Prostate gland (tissue), 2 donors: ENCODE measurements at regions of chr7 and their contacts with region 1.

Region 1: DNA sequence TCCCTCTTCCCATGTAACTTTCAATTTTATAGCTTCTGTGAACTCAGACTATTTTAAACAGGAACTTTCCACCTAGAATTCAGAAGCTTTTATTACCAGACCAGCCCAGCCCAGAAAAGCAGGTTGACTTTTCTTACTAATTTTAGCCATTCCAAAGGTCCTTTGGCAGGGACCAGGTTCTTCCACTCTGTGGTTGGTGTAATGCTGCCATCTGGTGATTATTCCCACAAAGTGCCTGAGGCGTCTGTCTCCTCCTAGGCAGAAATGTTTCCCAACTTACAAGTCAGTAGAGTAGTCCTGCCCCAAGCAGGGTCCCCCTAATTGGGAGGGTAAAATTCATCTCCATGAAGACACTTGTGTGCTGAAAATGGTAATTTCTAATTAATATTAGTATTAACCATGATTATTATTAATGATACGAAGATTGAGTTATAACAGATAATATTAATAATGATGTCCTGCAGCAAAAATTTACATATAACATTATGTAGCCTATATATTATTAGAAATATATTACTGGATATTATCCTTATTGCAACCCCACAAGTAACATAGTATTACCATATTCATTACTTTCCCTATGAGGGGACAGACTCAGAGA is 53.0 kb upstream of the PPP1R17 start:
- DNase-seq: peak; percentile 55
- H3K4me3 ChIP-seq: no peak overlapping the region
- H3K27ac ChIP-seq: no peak overlapping the region
- H3K4me1 ChIP-seq: no peaks in the 10 kb centered on the region
- H3K27me3 ChIP-seq: no peaks in the 10 kb centered on the region
- CTCF ChIP-seq: peak in 3 of 4 experiments; percentile 60 to 74 (median 71)
- POLR2A ChIP-seq: no peak

Region 2: GRCh38 chr7:30983042-30983913 is 650.7 kb before region 1 on chr7:
- intact Hi-C with region 1: loop called (anchors 10 kb)
- DNase-seq: peak; percentile 73
- H3K4me3 ChIP-seq: no peak overlapping the region
- H3K27ac ChIP-seq: no peak overlapping the region
- H3K4me1 ChIP-seq: peaks cover 3% of the 10 kb centered on the region
- H3K27me3 ChIP-seq: no peaks in the 10 kb centered on the region
- CTCF ChIP-seq: peak; percentile 80 to 91 (median 88)
- POLR2A ChIP-seq: no peak

Region 3: GRCh38 chr7:31134246-31135188 is 499.5 kb before region 1 on chr7:
- intact Hi-C with region 1: loop called (anchors 5 kb)
- DNase-seq: peak; percentile 64
- H3K4me3 ChIP-seq: no peak overlapping the region
- H3K27ac ChIP-seq: no peak overlapping the region
- H3K4me1 ChIP-seq: no peaks in the 10 kb centered on the region
- H3K27me3 ChIP-seq: no peaks in the 10 kb centered on the region
- CTCF ChIP-seq: peak in 3 of 4 experiments; percentile 62 to 75 (median 68)
- POLR2A ChIP-seq: no peak

Region 4: DNA sequence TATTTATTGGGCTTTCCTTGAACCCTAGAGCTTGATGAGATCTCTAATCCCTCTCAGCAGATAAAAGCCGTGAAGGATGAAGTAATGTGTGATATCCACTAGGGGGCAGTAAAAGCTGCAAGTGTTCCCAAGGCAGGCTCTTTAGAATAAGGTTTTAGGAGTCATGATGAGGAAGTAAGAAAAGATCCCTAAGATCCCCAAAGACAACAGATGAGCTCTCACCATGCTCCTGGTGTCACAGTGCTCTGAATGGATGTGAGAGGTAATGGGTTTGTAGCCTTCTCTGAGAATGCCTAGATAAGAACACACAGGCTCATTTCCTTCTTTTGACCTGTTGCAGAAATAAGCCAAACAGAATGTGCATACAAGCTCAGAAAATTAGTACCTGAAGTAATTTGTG is 190.5 kb before region 1 on chr7:
- intact Hi-C with region 1: loop called (anchors 5 kb)
- DNase-seq: no peak
- H3K4me3 ChIP-seq: no peak overlapping the region
- H3K27ac ChIP-seq: no peak overlapping the region
- H3K4me1 ChIP-seq: no peaks in the 10 kb centered on the region
- H3K27me3 ChIP-seq: no peaks in the 10 kb centered on the region
- CTCF ChIP-seq: peak in 3 of 4 experiments; percentile 60 to 67 (median 63)
- POLR2A ChIP-seq: no peak

Region 5: GRCh38 chr7:32015133-32015532 is 381.1 kb after region 1 on chr7:
- intact Hi-C with region 1: no loop called
- DNase-seq: no peak
- H3K4me3 ChIP-seq: no peak overlapping the region
- H3K27ac ChIP-seq: no peak overlapping the region
- H3K4me1 ChIP-seq: no peaks in the 10 kb centered on the region
- H3K27me3 ChIP-seq: no peaks in the 10 kb centered on the region
- CTCF ChIP-seq: no peak
- POLR2A ChIP-seq: no peak